ENCODE measurements at regions of chr11 and their contacts with region 1.

Region 1: DNA sequence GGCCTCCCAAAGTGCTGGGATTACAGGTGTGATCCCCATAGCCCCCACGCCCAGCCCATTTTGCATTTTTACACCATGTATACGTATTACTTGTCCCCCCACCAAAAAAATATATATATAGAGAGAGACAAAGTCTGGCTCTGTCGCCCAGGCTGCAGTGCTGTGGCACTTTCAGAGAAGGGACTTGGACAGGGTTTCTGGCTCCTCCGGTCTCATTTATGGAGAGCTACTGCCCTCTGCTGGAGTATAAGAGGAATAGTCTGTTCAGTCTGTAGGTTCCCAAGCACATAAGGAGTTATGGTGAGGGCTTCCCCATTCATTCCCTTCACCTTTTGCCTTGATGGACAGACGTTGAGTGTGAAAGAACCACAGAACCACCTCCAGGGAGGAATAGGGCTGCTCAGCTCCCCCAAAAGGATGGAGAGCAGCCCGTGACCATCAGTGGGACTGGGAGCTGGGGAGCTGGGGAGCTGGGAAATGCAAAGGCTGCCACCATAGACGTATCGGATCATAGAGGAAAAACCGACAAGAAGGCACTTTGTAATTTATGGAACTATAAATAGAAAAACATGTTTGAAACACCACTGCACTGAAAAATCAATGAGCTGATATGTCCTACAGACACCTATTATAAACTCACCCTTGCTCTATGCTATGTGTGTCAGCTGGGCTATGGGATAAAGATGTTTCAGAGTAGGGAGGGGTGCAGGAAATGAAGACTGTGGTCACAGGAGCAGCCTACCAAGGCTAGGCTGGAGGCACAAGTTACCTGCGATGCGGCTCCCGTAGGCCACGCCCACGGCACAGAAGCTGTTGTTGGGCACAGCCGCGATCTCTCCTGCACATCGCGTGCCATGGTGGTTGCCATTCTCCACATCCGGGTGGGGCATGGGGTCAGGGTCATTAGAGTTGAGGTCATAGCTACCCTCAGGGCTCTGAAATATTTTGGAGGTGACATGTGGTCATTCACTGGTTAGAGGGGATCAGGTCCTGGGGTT is 5.2 kb downstream of the PCSK7 start:
- DNase-seq: peak; percentile 56 to 75 (median 66)
- ATAC-seq: peak; percentile 60 to 67
- H3K4me3 ChIP-seq: no peak overlapping the region
- H3K27ac ChIP-seq: no peak overlapping the region
- H3K4me1 ChIP-seq: peaks cover under 1% of the 10 kb centered on the region
- H3K27me3 ChIP-seq: no peaks in the 10 kb centered on the region

Region 2: DNA sequence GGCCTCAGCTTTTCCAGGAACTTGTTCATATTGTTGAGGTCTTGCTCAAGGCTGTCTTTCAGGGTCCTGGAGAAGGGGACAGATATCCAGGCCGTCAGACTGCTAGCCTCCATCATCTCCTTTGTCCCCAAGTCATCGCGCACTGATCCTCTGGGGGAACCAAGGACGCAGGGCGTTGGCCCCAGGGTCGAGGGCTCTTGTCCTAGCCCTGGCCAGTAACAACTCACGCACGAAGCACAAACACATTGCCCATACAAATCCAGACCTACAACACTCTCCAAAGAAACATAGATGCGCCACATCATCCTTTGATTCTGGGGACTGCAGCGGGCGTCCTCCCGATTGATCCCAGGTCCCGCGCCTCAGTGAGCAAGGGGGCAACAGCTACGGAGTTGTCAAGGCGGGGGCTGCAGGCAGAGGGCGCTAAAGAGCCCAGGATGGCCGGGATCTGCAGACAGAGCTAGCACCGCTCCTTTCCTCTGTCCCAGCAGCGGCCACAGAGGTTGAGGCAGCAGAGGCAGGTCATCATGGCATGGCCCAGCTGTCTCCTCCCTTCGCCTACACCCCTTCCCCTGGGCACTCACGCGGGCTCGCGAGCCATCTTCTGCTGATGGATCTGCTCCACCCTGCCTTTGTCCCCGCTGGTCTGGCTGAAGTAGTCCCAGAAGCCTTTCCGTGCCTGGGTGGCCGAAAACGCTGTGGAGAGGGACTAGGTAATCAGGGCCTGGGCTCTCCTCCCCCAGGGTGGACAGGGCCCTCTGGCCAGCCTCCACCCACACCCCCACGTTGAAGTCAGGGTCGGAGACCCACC is 435.5 kb before region 1 on chr11:
- intact Hi-C with region 1: loop called in 3 of 4 experiments (anchors 10 kb)
- DNase-seq: peak; percentile 79 to 92 (median 92)
- ATAC-seq: peak; percentile 70
- H3K4me3 ChIP-seq: no peak overlapping the region
- H3K27ac ChIP-seq: no peak overlapping the region
- H3K4me1 ChIP-seq: peaks cover 3% of the 10 kb centered on the region
- H3K27me3 ChIP-seq: no peaks in the 10 kb centered on the region

Region 3: DNA sequence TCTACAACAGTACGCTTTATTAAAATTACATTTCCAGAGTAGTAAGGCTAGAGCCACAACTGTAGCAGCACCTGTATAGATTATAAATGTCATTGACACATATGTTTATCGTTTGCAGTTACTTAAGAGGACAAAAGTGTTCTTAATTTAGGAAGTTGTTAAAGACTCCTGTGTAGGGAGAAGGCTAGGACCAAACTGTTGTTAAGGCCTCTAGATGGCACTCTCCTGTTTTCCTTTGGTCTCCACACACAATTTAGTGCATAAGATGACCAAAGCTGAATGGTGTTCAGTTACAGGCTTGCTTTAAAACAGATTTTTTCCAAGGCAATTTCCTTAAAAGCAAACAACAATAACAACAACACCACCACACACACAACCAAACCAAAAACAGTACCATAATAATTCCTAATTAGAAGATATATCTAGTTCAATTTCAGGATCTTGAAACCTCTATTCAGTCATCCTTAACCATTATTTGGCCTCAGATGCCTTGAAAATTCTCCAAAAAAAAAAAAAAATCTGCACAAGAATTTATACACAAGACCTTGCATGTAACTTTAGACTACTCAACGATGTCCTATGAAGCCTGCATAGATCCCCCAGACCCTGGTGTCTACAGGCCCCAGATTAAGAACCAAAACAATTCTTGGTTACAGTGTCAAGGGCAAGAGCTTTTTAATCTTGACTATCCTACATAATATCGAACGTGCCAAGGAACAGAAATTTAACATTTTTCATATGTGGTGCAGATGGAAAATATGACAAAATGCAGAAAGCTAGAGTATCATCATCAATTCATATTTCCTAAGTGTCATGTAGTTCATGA is 346.7 kb before region 1 on chr11:
- intact Hi-C with region 1: loop called (anchors 5 to 10 kb)
- DNase-seq: no peak
- ATAC-seq: peak; percentile 86 to 90
- H3K4me3 ChIP-seq: no peak overlapping the region
- H3K27ac ChIP-seq: no peak overlapping the region
- H3K4me1 ChIP-seq: peaks cover 4% of the 10 kb centered on the region
- H3K27me3 ChIP-seq: no peaks in the 10 kb centered on the region

Region 4: GRCh38 chr11:116885951-116886655 is 340.6 kb before region 1 on chr11:
- intact Hi-C with region 1: loop called in 1 of 4 experiments (anchors 5 kb)
- DNase-seq: no peak
- ATAC-seq: peak; percentile 66 to 87
- H3K4me3 ChIP-seq: no peak overlapping the region
- H3K27ac ChIP-seq: no peak overlapping the region
- H3K4me1 ChIP-seq: no peaks in the 10 kb centered on the region
- H3K27me3 ChIP-seq: no peaks in the 10 kb centered on the region

Region 5: GRCh38 chr11:117107701-117108590 is 118.7 kb before region 1 on chr11:
- intact Hi-C with region 1: loop called in 1 of 4 experiments (anchors 5 kb)
- DNase-seq: no peak
- ATAC-seq: no peak
- H3K4me3 ChIP-seq: no peak overlapping the region
- H3K27ac ChIP-seq: no peak overlapping the region
- H3K4me1 ChIP-seq: no peaks in the 10 kb centered on the region
- H3K27me3 ChIP-seq: no peaks in the 10 kb centered on the region

Region 6: GRCh38 chr11:117160826-117161225 is 65.9 kb before region 1 on chr11:
- intact Hi-C with region 1: no loop called
- DNase-seq: no peak
- ATAC-seq: peak in 1 of 2 donors; percentile 75
- H3K4me3 ChIP-seq: no peak overlapping the region
- H3K27ac ChIP-seq: no peak overlapping the region
- H3K4me1 ChIP-seq: peaks cover 2% of the 10 kb centered on the region
- H3K27me3 ChIP-seq: no peaks in the 10 kb centered on the region

Region 7: DNA sequence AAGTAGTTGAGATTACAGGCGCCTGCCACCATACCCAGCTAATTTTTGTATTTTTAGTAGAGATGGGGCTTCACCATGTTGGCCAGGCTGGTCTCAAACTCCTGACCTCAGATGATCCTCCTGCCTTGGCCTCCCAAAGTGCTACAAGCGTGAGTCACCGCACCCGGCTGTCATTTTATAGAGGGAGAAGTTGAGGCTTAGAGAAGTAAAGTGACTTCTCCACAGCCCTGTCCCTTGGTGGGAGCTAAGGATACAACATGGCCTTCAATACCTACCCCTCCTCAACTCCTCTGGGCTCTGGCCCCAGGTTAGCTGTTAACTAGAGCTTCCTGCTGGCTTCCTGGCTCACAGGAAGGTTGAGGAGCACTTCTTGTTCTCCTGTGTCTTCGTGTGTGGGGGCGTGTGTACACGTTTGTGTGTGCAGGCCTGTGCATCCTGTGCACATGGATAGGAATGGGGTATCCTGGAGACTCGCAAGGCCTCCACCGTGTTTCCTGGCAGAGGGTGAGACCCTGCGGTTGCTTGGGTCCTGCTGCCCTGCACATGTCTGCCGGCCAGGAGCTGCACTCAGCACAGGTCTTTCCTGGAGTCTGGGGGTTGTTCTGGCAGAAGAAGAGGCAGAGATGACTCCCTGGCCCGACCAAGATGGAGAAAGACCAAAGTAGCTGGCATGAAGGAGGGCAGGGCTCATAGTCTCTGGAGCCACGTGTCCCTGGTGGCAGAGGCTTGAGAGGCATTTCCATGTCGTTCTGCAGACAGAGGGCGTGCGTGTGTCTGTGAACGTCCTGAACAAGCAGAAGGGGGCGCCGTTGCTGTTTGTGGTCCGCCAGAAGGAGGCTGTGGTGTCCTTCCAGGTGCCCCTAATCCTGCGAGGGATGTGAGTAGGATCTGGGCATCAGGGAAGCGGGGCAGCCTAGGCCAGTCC is 45.8 kb before region 1 on chr11:
- intact Hi-C with region 1: loop called in 2 of 4 experiments (anchors 5 kb)
- DNase-seq: peak; percentile 74 to 91 (median 87)
- ATAC-seq: peak; percentile 11
- H3K4me3 ChIP-seq: no peak overlapping the region
- H3K27ac ChIP-seq: no peak overlapping the region
- H3K4me1 ChIP-seq: peaks cover 17% of the 10 kb centered on the region
- H3K27me3 ChIP-seq: no peaks in the 10 kb centered on the region

Region 8: DNA sequence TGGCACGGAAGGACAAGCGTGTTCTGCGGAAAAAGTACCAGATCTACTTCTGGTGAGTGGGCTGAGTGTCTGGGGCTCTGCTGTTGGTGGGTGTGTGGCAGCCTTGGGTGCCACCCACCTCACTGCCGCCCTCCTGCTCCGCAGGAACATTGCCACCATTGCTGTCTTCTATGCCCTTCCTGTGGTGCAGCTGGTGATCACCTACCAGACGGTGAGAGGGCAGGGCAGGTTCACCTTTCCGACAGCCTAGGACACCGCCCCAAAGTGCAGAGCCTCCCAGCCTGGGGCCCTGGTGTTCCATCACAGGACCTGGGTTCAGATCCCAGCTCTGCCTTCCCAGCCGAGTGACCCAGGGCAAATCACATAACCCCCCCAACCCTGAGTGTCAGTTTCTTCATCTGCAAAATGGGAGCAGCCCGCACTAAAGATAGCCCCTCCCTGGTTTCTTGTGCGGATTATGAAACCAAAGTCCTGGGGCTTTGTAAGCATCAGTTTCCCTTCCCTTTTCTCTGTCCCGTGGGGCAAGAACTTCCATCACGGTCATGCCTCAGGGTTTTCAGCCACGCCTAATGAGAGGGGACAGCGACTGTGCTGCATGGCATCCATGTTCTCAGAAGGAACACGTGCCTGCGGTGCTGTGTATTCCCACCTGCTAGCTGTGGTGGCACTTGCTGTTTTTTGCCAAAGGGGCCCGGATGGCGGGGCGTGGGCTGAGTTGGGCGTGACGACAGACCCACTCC is 37.3 kb before region 1 on chr11:
- intact Hi-C with region 1: loop called in 2 of 4 experiments (anchors 5 kb)
- DNase-seq: peak in 1 of 3 donors; percentile 64
- ATAC-seq: peak in 1 of 2 donors; percentile 10
- H3K4me3 ChIP-seq: no peak overlapping the region
- H3K27ac ChIP-seq: no peak overlapping the region
- H3K4me1 ChIP-seq: no peaks in the 10 kb centered on the region
- H3K27me3 ChIP-seq: no peaks in the 10 kb centered on the region

Measured in right cardiac atrium (tissue), 5 donors.